Astrocyte of the cerebellum (primary cell): ENCODE measurements at regions of chr12 and their contacts with region 1.

Region 1: GRCh38 chr12:11949738-11950411 is 120.9 kb upstream of the BCL2L14 start:
- DNase-seq: no peak
- H3K4me3 ChIP-seq: no peak overlapping the region
- CTCF ChIP-seq: no peak

Region 2: GRCh38 chr12:11601647-11602046 is 348.2 kb before region 1 on chr12:
- in situ Hi-C with region 1: no loop called
- DNase-seq: no peak
- H3K4me3 ChIP-seq: no peak overlapping the region
- CTCF ChIP-seq: no peak

Region 3: GRCh38 chr12:11906286-11906935 is 43.5 kb before region 1 on chr12:
- in situ Hi-C with region 1: loop called (anchors 5 kb)
- DNase-seq: peak; percentile 18
- H3K4me3 ChIP-seq: no peak overlapping the region
- CTCF ChIP-seq: no peak